Mammary epithelial cell (primary cell): ENCODE measurements at regions of chr17 and their contacts with region 1.

Region 1: DNA sequence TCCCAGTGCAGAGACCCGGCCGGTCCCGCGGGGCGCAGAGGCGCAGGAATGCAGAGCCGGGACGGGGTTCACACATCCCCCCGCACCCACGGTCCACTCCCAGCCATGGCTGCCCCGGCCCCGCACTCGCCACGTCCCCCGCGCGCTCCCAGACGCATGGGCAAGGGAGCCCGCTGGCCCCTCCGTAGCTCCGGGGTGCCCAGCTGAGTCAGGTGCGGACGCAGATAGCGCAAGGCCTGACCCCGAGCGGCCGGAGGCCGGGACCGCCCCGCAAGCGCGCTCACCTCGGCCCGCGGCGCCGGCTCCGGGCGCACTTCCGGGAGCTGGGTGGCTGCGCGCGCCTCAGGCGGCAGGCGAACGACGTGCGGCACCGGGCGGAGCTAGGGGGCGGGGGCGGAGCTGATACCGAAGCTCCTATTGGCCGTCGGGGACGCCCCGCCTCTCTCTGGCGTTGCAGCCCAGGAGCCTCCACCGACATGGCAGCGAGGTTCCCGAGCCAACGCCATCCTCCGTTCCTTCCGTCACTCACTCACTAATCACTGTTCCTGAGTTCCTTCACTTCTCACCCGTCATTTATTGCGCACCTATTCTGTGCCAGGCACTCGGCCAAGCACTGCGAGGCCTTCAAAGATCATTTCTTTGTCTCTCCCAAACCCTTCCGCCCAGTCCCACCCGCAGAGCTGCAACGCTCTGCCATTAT is at the start of gene ZNF18:
- DNase-seq: peak; percentile 91
- H3K4me3 ChIP-seq: peak within 1 kb of the TSS; percentile 75 to 95 (median 81)
- H3K27ac ChIP-seq: peak within 1 kb of the TSS; percentile 64
- H3K4me1 ChIP-seq: no peaks in the 10 kb centered on the region
- H3K27me3 ChIP-seq: no peaks in the 10 kb centered on the region
- CTCF ChIP-seq: no peak
- total RNA-seq, gene ZNF18: 7.4 to 9.7 TPM

Region 2: DNA sequence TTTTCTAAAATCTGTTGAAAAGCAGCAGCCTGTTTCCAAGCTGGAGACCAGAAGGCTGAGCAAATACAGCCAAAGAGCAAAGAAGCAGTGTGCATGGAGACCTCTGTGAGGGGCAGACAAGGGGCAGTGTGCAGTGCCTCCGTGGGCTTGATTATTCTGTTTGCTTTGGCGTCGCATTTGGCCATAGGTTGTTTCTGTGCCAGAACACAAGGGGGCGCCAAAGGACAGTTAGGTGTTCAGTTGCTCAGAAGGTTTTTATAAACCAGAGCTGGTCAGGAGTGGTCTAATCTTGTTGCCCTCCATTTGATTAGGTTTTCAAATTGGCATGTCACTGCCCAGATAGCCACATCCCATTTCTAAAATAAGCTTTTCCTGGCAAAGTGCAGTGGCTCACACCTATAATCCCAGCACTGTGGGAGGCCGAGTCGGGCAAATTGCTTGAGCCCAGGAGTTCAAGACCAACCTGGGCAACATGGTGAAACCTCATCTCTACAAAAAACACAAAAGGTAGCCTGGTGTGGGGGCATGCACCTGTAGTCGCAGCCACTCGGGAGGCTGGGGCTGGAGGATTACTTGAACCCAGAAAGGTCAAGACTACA is 1350.8 kb before region 1 on chr17:
- CTCF ChIA-PET with region 1: no interaction called
- dilution Hi-C with region 1: no loop called
- in situ Hi-C with region 1: loop called in 1 of 2 experiments (anchors 25 kb)
- intact Hi-C with region 1: no loop called
- DNase-seq: peak; percentile 34
- H3K4me3 ChIP-seq: no peak overlapping the region
- H3K27ac ChIP-seq: no peak overlapping the region
- H3K4me1 ChIP-seq: no peaks in the 10 kb centered on the region
- H3K27me3 ChIP-seq: no peaks in the 10 kb centered on the region
- CTCF ChIP-seq: peak; percentile 90

Region 3: GRCh38 chr17:10729334-10730193 is 1267.7 kb before region 1 on chr17 and contains the start of gene TMEM220:
- CTCF ChIA-PET with region 1: no interaction called
- dilution Hi-C with region 1: no loop called
- in situ Hi-C with region 1: loop called in 1 of 2 experiments (anchors 25 kb)
- intact Hi-C with region 1: no loop called
- DNase-seq: peak; percentile 5
- H3K4me3 ChIP-seq: peak within 1 kb of the TSS; percentile 52 to 72 (median 65)
- H3K27ac ChIP-seq: no peak within 1 kb of the TSS
- H3K4me1 ChIP-seq: peaks cover 3% of the 10 kb centered on the region
- H3K27me3 ChIP-seq: no peaks in the 10 kb centered on the region
- CTCF ChIP-seq: no peak
- total RNA-seq, gene TMEM220: 2.0 to 2.1 TPM

Region 4: GRCh38 chr17:10875979-10876555 is 1121.2 kb before region 1 on chr17:
- CTCF ChIA-PET with region 1: interaction called, 3 read pairs
- dilution Hi-C with region 1: no loop called
- in situ Hi-C with region 1: loop called in 1 of 2 experiments (anchors 25 kb)
- intact Hi-C with region 1: no loop called
- DNase-seq: peak; percentile 11
- H3K4me3 ChIP-seq: no peak overlapping the region
- H3K27ac ChIP-seq: no peak overlapping the region
- H3K4me1 ChIP-seq: no peaks in the 10 kb centered on the region
- H3K27me3 ChIP-seq: no peaks in the 10 kb centered on the region
- CTCF ChIP-seq: peak; percentile 34 to 62

Region 5: GRCh38 chr17:11302401-11303106 is 694.7 kb before region 1 on chr17:
- CTCF ChIA-PET with region 1: no interaction called
- dilution Hi-C with region 1: no loop called
- in situ Hi-C with region 1: no loop called
- intact Hi-C with region 1: loop called (anchors 5 kb)
- DNase-seq: no peak
- H3K4me3 ChIP-seq: no peak overlapping the region
- H3K27ac ChIP-seq: no peak overlapping the region
- H3K4me1 ChIP-seq: no peaks in the 10 kb centered on the region
- H3K27me3 ChIP-seq: no peaks in the 10 kb centered on the region
- CTCF ChIP-seq: no peak

Region 6: DNA sequence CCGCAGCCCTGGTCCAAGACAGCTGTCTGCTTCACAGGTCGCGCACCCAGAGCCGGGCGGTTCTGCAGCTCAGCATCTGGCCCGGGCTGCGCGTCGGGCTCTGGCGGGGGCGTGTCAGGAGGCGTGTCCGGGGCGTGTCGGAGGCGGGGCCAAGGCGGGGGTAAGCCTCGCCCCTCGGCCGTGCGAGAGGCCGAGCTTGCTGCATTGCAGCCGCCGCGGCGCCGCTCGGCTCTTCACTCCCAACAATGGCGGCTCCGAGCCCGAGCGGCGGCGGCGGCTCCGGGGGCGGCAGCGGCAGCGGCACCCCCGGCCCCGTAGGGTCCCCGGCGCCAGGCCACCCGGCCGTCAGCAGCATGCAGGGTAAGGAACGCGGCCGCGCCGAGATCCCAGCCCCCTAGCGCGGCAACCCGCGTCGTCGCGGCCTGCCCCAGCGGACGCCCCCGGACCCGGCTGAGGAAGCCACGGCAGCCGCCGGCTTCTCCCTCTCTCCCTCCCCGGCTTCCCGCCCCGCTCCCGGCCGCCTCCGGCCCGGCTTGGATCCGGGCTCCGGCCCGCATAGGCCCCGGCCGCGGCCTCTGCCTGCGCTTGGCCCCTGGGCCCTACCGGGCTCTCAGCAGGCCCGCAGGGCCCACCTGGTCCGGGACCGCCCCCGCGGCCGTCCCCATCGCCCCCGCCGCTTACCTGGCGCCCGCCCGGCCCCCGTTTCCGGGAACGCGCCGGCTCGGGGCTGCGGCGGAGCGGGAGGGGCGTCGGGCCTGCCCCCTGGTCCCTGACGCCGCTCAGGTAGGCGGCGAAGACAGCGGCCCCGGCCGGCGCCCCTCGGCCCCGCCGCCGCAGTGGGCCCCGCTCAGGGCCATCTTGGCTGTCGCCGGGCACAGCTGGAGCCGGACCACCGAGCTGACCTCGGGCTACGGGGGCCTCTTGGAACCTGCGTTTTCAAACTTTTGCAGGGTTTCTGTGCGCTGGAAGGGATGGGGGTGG is 23.6 kb after region 1 on chr17 and contains the start of gene MAP2K4:
- CTCF ChIA-PET with region 1: no interaction called
- dilution Hi-C with region 1: no loop called
- in situ Hi-C with region 1: no loop called
- intact Hi-C with region 1: loop called (anchors 2 kb)
- DNase-seq: peak; percentile 86
- H3K4me3 ChIP-seq: peak within 1 kb of the TSS; percentile 67 to 83 (median 72)
- H3K27ac ChIP-seq: peak within 1 kb of the TSS; percentile 64
- H3K4me1 ChIP-seq: peaks cover 40% of the 10 kb centered on the region
- H3K27me3 ChIP-seq: no peaks in the 10 kb centered on the region
- CTCF ChIP-seq: no peak
- total RNA-seq, gene MAP2K4: 36.2 to 42.2 TPM

Region 7: GRCh38 chr17:12078791-12079190 is 81.5 kb after region 1 on chr17:
- CTCF ChIA-PET with region 1: no interaction called
- dilution Hi-C with region 1: no loop called
- in situ Hi-C with region 1: no loop called
- intact Hi-C with region 1: loop called (anchors 10 kb)
- DNase-seq: peak; percentile 72
- H3K4me3 ChIP-seq: peak overlapping the region in 1 of 3 experiments; percentile 8
- H3K27ac ChIP-seq: peak overlapping the region; percentile 32
- H3K4me1 ChIP-seq: peaks cover 19% of the 10 kb centered on the region
- H3K27me3 ChIP-seq: no peaks in the 10 kb centered on the region
- CTCF ChIP-seq: no peak